ENCODE measurements at regions of chr4 and their contacts with region 1.

Region 1: DNA sequence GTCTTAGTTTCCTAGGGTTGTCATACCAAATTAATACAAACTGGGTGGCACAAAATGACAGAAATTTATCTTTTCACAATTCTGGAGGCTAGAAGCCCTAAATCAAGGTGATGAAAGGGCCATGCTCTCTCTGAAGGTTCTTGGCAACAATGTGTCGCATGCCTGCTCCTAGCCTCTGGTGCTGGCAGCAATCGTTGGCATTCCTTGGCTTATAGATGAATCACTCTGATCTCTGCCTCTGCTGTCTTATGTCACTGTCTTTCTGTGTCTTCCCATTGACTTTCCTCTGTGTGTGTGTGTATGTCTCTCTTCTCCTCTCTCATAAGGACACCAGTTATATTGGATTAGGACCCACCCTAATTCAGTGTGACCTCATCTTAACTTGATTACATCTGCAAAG is 15.9 kb upstream of the INTU start:
- DNase-seq: no peak
- H3K4me3 ChIP-seq: no peak overlapping the region
- CTCF ChIP-seq: no peak

Region 2: DNA sequence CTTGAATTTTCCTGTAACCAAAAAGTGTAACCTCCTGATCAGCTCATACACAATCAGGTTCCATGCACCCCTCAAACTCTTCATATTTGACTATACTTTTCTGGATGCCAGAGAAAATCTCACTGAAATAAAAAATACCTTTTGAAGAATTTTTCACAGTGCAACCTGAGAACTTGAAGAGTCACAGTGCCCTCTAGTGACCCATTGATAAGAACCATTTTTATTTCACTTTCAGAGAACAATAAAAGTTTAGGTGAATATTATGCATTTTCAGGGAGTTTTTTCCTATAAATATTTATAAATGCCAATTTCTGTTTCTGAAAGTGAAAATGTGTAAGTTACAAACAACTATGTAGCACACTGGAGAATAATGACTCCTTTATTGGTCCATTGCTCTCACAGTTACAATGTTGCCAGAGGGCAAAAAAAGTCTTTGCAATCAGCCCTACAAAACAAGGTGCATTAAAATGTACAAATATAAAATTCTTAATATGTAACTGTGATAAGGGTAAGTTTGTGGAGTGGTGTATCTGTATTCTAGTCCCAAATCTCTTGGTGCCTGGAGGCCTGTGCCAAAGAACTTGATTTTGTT is 137.8 kb before region 1 on chr4:
- CTCF ChIA-PET with region 1: no interaction called
- POLR2A ChIA-PET with region 1: no interaction called
- DNase-seq: no peak
- H3K4me3 ChIP-seq: no peak overlapping the region
- CTCF ChIP-seq: peak; percentile 18

Region 3: GRCh38 chr4:127604949-127605709 is 11.8 kb before region 1 on chr4:
- CTCF ChIA-PET with region 1: interaction called, 16 read pairs
- POLR2A ChIA-PET with region 1: no interaction called
- DNase-seq: no peak
- H3K4me3 ChIP-seq: no peak overlapping the region
- CTCF ChIP-seq: peak; percentile 12

Region 4: GRCh38 chr4:127920521-127920920 is 303.6 kb after region 1 on chr4:
- CTCF ChIA-PET with region 1: no interaction called
- POLR2A ChIA-PET with region 1: no interaction called
- DNase-seq: no peak
- H3K4me3 ChIP-seq: no peak overlapping the region
- CTCF ChIP-seq: no peak

Region 5: DNA sequence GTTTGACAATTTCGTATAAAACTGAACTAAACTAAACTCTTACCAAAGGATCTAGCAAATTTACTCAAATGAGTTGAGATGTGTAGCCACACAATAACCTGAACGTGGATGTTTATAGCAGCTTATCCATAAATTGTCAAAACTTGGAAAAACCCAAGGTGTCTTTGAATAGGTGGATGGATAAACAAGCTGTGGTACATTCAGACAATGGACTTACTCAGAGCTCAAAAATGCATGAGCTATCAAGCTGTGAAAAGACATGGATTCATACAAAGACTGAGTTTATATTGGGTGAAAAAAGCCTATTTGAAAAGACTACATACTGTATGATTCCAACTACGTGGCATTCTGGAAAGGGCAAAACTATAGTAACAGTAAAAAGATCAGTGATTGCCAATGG is 513.7 kb after region 1 on chr4:
- CTCF ChIA-PET with region 1: no interaction called
- POLR2A ChIA-PET with region 1: no interaction called
- DNase-seq: no peak
- H3K4me3 ChIP-seq: no peak overlapping the region
- CTCF ChIP-seq: no peak